CD8-positive, alpha-beta memory T cell (primary cell): ENCODE measurements at regions of chr19 and their contacts with region 1.

Region 1: GRCh38 chr19:4108767-4109625 is 14.9 kb downstream of the MAP2K2 start:
- DNase-seq: peak; percentile 73 to 92 (median 87)
- H3K4me3 ChIP-seq: peak overlapping the region; percentile 8
- H3K4me3 Mint-ChIP-seq: peak overlapping the region; percentile 40 to 91 (median 71)
- H3K27ac ChIP-seq: peak overlapping the region; percentile 62
- H3K27ac Mint-ChIP-seq: peak overlapping the region; percentile 91 to 99 (median 98)
- H3K4me1 ChIP-seq: peaks cover 59% of the 10 kb centered on the region
- H3K4me1 Mint-ChIP-seq: peaks cover 54 to 83% (median 64%) of the 10 kb centered on the region in 3 donors
- H3K27me3 ChIP-seq: no peaks in the 10 kb centered on the region
- H3K27me3 Mint-ChIP-seq: peaks cover 0 to 4% of the 10 kb centered on the region in 2 donors

Region 2: DNA sequence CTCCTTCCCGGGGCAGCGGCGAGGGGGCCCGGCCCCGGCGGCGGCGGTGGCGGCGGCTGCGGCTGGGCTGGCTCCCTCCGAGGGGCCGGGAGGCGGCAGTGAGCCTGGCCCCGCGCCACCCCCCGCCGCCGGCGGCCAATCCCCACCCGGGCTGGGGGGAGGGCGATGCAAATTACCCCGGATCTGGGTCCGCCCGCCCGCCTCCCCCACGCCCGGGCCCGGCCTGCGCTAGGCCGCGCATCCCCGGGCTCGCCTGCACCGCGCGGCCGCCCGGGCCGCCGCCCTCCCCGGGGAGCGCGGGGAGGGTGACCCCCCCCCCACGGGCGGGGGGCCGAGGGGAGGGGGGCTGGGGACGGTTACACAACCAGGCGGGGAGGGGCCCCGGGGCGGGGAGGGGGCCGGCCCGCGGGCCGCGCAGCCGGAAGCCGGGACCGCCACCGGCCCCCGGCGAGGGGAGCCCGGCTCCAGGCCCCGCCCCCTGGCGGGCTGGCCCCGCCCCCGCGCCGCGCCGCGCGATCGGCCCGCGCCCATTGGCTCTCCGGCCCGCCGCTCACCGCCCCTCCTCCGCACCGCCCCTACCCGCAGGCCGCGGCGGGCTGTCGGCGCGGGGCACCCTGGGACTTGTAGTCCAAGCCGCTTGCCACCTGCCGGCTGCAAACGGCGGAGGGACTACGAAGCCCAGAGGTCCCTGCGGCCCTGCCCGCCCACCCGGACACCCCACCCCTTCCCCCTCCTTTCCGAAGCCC is 43.4 kb before region 1 on chr19:
- CTCF ChIA-PET with region 1: interaction called, 4 read pairs
- POLR2A ChIA-PET with region 1: interaction called, 35 read pairs
- DNase-seq: peak; percentile 95 to 98 (median 98)
- H3K4me3 ChIP-seq: no peak overlapping the region
- H3K4me3 Mint-ChIP-seq: peak overlapping the region; percentile 67 to 89 (median 80)
- H3K27ac ChIP-seq: no peak overlapping the region
- H3K27ac Mint-ChIP-seq: peak overlapping the region in 7 of 8 donors; percentile 17 to 74 (median 51)
- H3K4me1 ChIP-seq: peaks cover 56% of the 10 kb centered on the region
- H3K4me1 Mint-ChIP-seq: peaks cover 34 to 54% (median 38%) of the 10 kb centered on the region in 3 donors
- H3K27me3 ChIP-seq: no peaks in the 10 kb centered on the region
- H3K27me3 Mint-ChIP-seq: peaks cover 0 to 3% of the 10 kb centered on the region in 2 donors

Region 3: GRCh38 chr19:4089400-4089908 is 19.5 kb before region 1 on chr19:
- CTCF ChIA-PET with region 1: interaction called, 23 read pairs
- POLR2A ChIA-PET with region 1: interaction called, 27 read pairs
- DNase-seq: peak; percentile 37 to 74 (median 52)
- H3K4me3 ChIP-seq: peak overlapping the region; percentile 49
- H3K4me3 Mint-ChIP-seq: peak overlapping the region; percentile 59 to 78 (median 72)
- H3K27ac ChIP-seq: peak overlapping the region; percentile 62
- H3K27ac Mint-ChIP-seq: peak overlapping the region; percentile 81 to 96 (median 94)
- H3K4me1 ChIP-seq: peaks cover 48% of the 10 kb centered on the region
- H3K4me1 Mint-ChIP-seq: peaks cover 35 to 52% (median 48%) of the 10 kb centered on the region in 3 donors
- H3K27me3 ChIP-seq: no peaks in the 10 kb centered on the region
- H3K27me3 Mint-ChIP-seq: no peaks in the 10 kb centered on the region

Region 4: GRCh38 chr19:4094761-4095487 is 14.1 kb before region 1 on chr19:
- CTCF ChIA-PET with region 1: interaction called, 23 read pairs
- POLR2A ChIA-PET with region 1: interaction called, 27 read pairs
- DNase-seq: no peak
- H3K4me3 ChIP-seq: no peak overlapping the region
- H3K4me3 Mint-ChIP-seq: no peak overlapping the region
- H3K27ac ChIP-seq: no peak overlapping the region
- H3K27ac Mint-ChIP-seq: no peak overlapping the region
- H3K4me1 ChIP-seq: peaks cover 1% of the 10 kb centered on the region
- H3K4me1 Mint-ChIP-seq: peaks cover under 1 to 2% (median 2%) of the 10 kb centered on the region in 3 donors
- H3K27me3 ChIP-seq: no peaks in the 10 kb centered on the region
- H3K27me3 Mint-ChIP-seq: no peaks in the 10 kb centered on the region

Region 5: DNA sequence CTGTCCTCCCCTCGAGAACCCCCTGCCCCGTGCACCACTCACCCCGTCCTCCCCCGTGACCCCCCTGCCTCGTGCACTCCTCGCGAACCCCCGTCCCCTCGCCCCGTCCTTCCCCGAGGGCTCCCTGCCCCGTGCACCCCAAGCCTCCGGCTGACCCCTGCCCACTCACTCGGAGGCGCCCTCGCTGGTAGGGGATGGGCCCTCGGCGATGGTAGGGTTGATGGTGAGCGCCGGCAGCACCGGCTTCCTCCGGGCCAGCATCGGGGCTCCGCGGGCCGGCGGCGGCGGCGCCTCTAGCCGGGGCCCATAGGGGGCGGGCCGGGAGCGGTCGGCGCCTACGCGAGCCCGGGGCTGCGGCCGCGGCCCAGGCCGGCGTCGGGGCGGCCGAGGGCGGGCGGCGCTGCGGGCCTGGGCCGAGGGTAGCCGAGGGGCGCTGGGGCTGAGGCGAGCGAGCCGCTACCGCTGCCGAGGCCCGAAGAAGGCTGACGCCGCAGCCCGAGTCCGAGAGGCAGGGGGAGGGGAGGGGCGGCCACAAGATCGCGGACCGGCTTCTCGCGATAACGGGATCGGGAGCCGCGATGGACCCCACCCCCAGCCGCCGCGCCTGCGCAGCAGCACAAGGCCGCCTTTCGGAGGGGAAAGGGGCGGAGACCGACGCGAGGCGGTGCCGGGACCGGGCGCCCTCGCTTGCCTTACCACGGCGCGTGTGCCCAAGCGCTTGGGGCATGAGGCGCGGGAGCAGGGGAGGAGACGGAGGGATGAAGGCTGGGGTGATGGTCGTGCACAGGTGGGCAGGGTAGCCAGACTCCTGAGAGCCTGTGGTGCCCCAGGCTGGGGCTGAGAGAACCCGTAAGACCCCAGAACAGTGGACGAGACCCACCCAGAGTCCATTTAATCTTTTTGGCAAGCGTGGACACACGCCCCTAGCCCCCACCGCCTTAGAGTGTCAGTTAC is 14.9 kb after region 1 on chr19 and contains the start of gene MAP2K2:
- CTCF ChIA-PET with region 1: no interaction called
- POLR2A ChIA-PET with region 1: interaction called, 15 read pairs
- DNase-seq: peak; percentile 93 to 98 (median 95)
- H3K4me3 ChIP-seq: peak within 1 kb of the TSS; percentile 82
- H3K4me3 Mint-ChIP-seq: peak within 1 kb of the TSS; percentile 90 to 96 (median 95)
- H3K27ac ChIP-seq: peak within 1 kb of the TSS; percentile 81
- H3K27ac Mint-ChIP-seq: peak within 1 kb of the TSS; percentile 86 to 99 (median 96)
- H3K4me1 ChIP-seq: peaks cover 17% of the 10 kb centered on the region
- H3K4me1 Mint-ChIP-seq: peaks cover 18 to 33% (median 18%) of the 10 kb centered on the region in 3 donors
- H3K27me3 ChIP-seq: no peaks in the 10 kb centered on the region
- H3K27me3 Mint-ChIP-seq: no peaks in the 10 kb centered on the region
- total RNA-seq, gene MAP2K2: 161 to 164 TPM